PC-3 (cell line): ENCODE measurements at regions of chr10 and their contacts with region 1.

Region 1: GRCh38 chr10:93458821-93459257 is 23.3 kb downstream of the MYOF start:
- DNase-seq: peak; percentile 96
- ATAC-seq: peak; percentile 76
- H3K4me3 ChIP-seq: peak overlapping the region; percentile 38; the same call in 1 of the 2 replicates
- H3K27ac ChIP-seq: peak overlapping the region; percentile 93
- H3K4me1 ChIP-seq: peaks cover 47% of the 10 kb centered on the region
- H3K27me3 ChIP-seq: no peaks in the 10 kb centered on the region
- CTCF ChIP-seq: no peak

Region 2: GRCh38 chr10:93445097-93445960 is 13.5 kb before region 1 on chr10:
- CTCF ChIA-PET with region 1: interaction called, 5 read pairs
- POLR2A ChIA-PET with region 1: interaction called, 10 read pairs
- intact Hi-C with region 1: no loop called
- DNase-seq: peak; percentile 93
- ATAC-seq: peak; percentile 95
- H3K4me3 ChIP-seq: no peak overlapping the region
- H3K27ac ChIP-seq: peak overlapping the region; percentile 80
- H3K4me1 ChIP-seq: peaks cover 53% of the 10 kb centered on the region
- H3K27me3 ChIP-seq: no peaks in the 10 kb centered on the region
- CTCF ChIP-seq: no peak